IMR-90 (cell line): ENCODE measurements at regions of chr22 and their contacts with region 1.

Region 1: GRCh38 chr22:37623075-37624016 is 14.7 kb downstream of the GGA1 start:
- DNase-seq: peak; percentile 43
- ATAC-seq: peak; percentile 94
- H3K4me3 ChIP-seq: no peak overlapping the region
- H3K27ac ChIP-seq: peak overlapping the region; percentile 9; the same call in 1 of the 2 replicates
- H3K4me1 ChIP-seq: peaks cover 3% of the 10 kb centered on the region; the same call in 1 of the 2 replicates
- H3K27me3 ChIP-seq: no peaks in the 10 kb centered on the region
- CTCF ChIP-seq: peak; percentile 70
- POLR2A ChIP-seq: no peak
- RAD21 ChIP-seq: peak; percentile 65

Region 2: DNA sequence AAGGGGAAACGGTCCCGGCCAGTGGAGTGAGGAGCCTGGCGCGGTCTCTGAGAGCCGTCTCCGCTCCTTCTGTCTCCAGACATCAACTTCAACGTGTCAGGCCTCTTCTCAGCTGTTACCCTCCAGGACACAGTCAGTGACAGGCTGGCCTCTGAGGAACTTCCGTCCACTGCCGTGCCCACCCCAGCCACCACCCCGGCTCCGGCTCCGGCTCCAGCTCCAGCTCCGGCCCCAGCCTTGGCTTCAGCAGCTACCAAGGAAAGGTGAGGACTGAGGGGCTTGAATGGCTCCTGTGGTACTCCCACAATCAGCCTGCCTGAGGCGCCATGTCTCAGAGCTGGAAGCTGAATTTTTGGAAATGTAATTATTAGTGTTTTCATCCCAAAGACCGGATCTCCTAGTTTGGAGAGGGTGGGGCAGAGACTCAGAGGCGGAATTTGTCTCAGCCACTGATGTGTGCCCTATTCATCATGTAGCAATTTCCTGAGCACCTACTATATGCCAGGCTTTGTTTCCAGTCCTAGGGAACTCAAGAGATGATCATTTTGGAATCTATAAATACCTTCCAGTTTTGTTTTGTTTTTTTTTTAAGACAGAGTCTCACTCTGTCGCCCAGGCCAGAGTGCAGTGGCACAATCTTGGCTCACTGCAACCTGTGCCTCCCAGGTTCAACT is 27.3 kb after region 1 on chr22:
- CTCF ChIA-PET with region 1: no interaction called
- POLR2A ChIA-PET with region 1: no interaction called
- dilution Hi-C with region 1: no loop called
- in situ Hi-C with region 1: no loop called
- intact Hi-C with region 1: no loop called
- DNase-seq: no peak
- ATAC-seq: no peak
- H3K4me3 ChIP-seq: no peak overlapping the region
- H3K27ac ChIP-seq: no peak overlapping the region
- H3K4me1 ChIP-seq: no peaks in the 10 kb centered on the region
- H3K27me3 ChIP-seq: no peaks in the 10 kb centered on the region
- CTCF ChIP-seq: no peak
- POLR2A ChIP-seq: no peak
- RAD21 ChIP-seq: no peak

Region 3: DNA sequence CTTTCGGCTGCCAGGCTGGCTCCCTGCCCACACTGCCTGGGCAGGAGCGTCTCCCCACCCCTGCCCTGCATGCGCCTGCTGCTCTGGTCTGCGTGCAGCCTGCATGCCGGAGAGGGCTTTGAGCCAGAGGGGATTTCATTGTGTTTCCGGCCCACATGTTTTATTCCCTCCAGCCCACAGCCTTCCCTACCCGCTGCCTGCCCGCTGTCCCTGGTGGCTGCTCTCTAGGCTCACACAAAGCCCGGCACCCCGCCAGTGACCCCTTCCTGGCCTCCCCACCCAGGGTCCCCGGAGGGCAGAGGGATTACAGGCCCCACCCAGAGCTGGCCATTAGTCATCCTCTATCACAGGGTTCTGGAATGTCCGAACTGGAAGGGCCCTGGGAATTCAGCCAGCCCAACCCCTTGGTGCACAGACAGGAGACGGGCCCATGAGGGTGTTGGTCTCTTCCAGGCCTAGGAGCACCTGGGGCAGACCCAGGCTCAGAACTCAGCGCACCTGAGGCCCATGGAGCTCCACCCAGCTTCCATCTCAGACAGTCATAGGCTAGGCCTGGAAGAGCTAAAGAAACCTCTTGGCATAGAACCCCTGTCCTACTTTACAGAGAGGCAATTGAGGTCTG is 129.2 kb after region 1 on chr22:
- CTCF ChIA-PET with region 1: no interaction called
- POLR2A ChIA-PET with region 1: no interaction called
- dilution Hi-C with region 1: no loop called
- in situ Hi-C with region 1: no loop called
- intact Hi-C with region 1: loop called (anchors 1 kb)
- DNase-seq: peak; percentile 85
- ATAC-seq: peak; percentile 83
- H3K4me3 ChIP-seq: no peak overlapping the region
- H3K27ac ChIP-seq: peak overlapping the region; percentile 83
- H3K4me1 ChIP-seq: peaks cover 51% of the 10 kb centered on the region
- H3K27me3 ChIP-seq: no peaks in the 10 kb centered on the region
- CTCF ChIP-seq: peak; percentile 15; the same call in 1 of the 2 replicates
- POLR2A ChIP-seq: no peak
- RAD21 ChIP-seq: peak; percentile 18; the same call in 1 of the 2 replicates